ENCODE measurements at regions of chr12 and their contacts with region 1.

Region 1: DNA sequence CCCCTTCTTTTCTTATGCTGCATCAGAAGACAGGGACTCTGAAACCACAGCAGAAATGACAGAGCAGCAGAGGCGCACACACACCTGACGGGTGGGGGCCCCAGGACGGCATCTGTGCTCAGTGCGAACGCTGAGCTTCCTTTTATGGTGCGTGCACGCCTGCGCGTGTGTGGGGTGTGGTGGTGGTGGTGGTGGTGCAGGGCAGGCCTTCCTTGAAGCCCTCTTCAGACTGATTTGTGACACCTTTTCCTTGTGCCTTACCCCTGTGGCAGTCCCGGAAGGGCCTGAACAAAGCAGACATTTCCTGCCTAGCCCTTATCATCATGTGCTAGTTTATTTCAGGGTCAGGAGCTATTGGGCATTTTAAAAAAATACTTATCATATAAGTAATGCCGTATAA is 75.7 kb downstream of the TSPAN9 start:
- DNase-seq: no peak
- ATAC-seq: no peak
- H3K4me3 ChIP-seq: no peak overlapping the region
- H3K27ac ChIP-seq: no peak overlapping the region
- H3K4me1 ChIP-seq: no peaks in the 10 kb centered on the region
- H3K27me3 ChIP-seq: peaks cover 4 to 12% of the 10 kb centered on the region in 2 experiments; a peak in 3 of 4 replicates
- CTCF ChIP-seq: no peak
- EP300 ChIP-seq: no peak
- POLR2A ChIP-seq: no peak
- RAD21 ChIP-seq: no peak

Region 2: GRCh38 chr12:2930865-2931264 is 222.0 kb before region 1 on chr12:
- CTCF ChIA-PET with region 1: no interaction called
- POLR2A ChIA-PET with region 1: no interaction called
- RAD21 ChIA-PET with region 1: no interaction called
- SMC1A ChIA-PET with region 1: no interaction called
- in situ Hi-C with region 1: no loop called
- intact Hi-C with region 1: no loop called
- DNase-seq: no peak
- ATAC-seq: no peak
- H3K4me3 ChIP-seq: no peak overlapping the region
- H3K27ac ChIP-seq: no peak overlapping the region
- H3K4me1 ChIP-seq: no peaks in the 10 kb centered on the region
- H3K27me3 ChIP-seq: no peaks in the 10 kb centered on the region
- CTCF ChIP-seq: no peak
- EP300 ChIP-seq: no peak
- POLR2A ChIP-seq: no peak
- RAD21 ChIP-seq: no peak

Region 3: GRCh38 chr12:3135522-3136461 is 17.1 kb before region 1 on chr12:
- CTCF ChIA-PET with region 1: interaction called, 11 read pairs
- POLR2A ChIA-PET with region 1: no interaction called
- RAD21 ChIA-PET with region 1: no interaction called
- SMC1A ChIA-PET with region 1: no interaction called
- in situ Hi-C with region 1: no loop called
- intact Hi-C with region 1: no loop called
- DNase-seq: peak; percentile 20
- ATAC-seq: peak; percentile 94
- H3K4me3 ChIP-seq: no peak overlapping the region
- H3K27ac ChIP-seq: no peak overlapping the region
- H3K4me1 ChIP-seq: no peaks in the 10 kb centered on the region
- H3K27me3 ChIP-seq: peaks cover 2 to 8% of the 10 kb centered on the region in 2 experiments; a peak in 3 of 4 replicates
- CTCF ChIP-seq: peak; percentile 71 to 82 (median 72)
- EP300 ChIP-seq: no peak
- POLR2A ChIP-seq: no peak
- RAD21 ChIP-seq: peak; percentile 81

Measured in GM12878 (cell line).